GM12878 (cell line): ENCODE measurements at regions of chr7 and their contacts with region 1.

Region 1: DNA sequence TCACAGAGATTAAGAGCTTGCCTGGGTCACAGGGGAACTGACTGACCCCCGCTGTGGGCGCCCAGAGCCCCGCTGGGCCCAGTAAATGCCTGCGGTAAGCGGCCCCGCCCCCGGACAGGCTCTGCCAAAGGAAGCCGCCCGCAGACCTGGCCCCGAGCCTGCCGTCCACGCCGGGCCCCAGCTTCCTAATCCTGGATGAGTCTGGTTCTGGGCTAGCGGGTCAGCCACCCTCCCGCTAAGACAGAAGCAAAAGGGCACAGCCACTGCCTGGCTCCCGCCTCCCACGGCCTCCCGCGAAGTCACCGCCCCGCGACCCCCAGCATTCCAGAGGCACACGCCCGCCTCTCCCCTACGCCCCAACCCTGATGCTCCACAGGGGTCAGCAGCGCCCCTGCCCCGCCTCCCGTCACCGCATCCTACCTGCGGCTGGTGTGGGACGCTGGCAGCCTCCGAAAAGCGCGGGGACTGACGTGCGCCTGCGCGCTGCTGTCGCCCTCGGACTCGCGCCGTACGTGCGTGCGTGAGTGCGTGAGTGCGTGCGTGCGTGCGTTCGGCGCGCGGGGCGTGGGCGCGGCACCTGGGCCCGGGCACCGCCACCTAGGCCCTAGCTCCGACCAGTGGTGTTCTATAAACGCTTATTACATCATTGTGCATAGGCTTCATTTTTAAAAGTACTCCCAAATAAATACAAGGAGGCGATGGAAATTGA is at the start of gene FIGNL1:
- DNase-seq: peak; percentile 59
- ATAC-seq: peak; percentile 93
- H3K4me3 ChIP-seq: peak within 1 kb of the TSS; percentile 77
- H3K27ac ChIP-seq: peak within 1 kb of the TSS; percentile 28
- H3K4me1 ChIP-seq: peaks cover 16% of the 10 kb centered on the region
- H3K27me3 ChIP-seq: no peaks in the 10 kb centered on the region; a peak in 1 of 4 replicates
- CTCF ChIP-seq: no peak
- EP300 ChIP-seq: no peak
- POLR2A ChIP-seq: peak; percentile 90
- RAD21 ChIP-seq: no peak
- polyA plus RNA-seq, gene FIGNL1: 11.5 to 11.6 TPM

Region 2: DNA sequence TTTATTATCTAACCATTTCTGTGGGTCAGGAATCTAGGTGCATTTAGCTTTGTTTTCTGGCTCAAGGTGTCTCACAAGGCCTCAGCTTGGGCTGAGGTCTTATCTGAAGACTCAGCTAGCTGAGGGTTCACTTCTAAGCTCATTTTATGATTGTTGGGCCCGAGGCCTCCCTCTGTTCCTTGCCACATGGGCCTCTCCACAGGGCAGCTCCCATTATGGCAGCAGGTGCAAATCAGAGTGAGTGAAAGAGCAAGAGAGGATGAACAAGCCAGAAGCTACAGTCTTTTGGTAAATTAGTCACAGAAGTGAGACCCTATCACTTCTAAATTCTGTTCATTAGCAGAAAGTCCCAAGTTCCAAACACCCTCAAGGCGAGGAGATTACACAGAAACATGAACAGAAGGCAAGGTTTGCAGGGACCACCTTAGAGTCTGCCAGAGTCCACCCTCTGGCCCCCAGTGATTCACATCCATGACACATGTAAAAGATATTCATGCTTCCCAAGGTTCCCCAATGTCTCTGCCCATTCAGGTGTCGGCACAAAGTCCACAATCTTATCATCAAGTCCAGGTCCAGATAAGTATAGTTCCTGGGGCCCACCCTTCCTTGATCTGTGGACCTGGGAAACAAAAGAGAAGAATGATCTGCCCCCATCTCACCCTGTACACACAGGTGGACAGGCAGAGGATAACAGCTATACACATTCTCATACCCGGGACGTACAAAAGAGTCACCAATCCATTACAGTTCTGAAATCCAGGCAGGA is 23.6 kb before region 1 on chr7:
- CTCF ChIA-PET with region 1: interaction called, 8 read pairs
- POLR2A ChIA-PET with region 1: interaction called, 3 read pairs
- RAD21 ChIA-PET with region 1: no interaction called
- SMC1A ChIA-PET with region 1: interaction called, 10 read pairs
- in situ Hi-C with region 1: no loop called
- intact Hi-C with region 1: no loop called
- DNase-seq: no peak
- ATAC-seq: no peak
- H3K4me3 ChIP-seq: no peak overlapping the region
- H3K27ac ChIP-seq: no peak overlapping the region
- H3K4me1 ChIP-seq: no peaks in the 10 kb centered on the region
- H3K27me3 ChIP-seq: no peaks in the 10 kb centered on the region
- CTCF ChIP-seq: no peak
- EP300 ChIP-seq: no peak
- POLR2A ChIP-seq: no peak
- RAD21 ChIP-seq: no peak

Region 3: GRCh38 chr7:50436133-50436806 is 13.8 kb before region 1 on chr7:
- CTCF ChIA-PET with region 1: interaction called, 6 read pairs
- POLR2A ChIA-PET with region 1: no interaction called
- RAD21 ChIA-PET with region 1: no interaction called
- SMC1A ChIA-PET with region 1: interaction called, 12 read pairs
- in situ Hi-C with region 1: no loop called
- intact Hi-C with region 1: no loop called
- DNase-seq: no peak
- ATAC-seq: no peak
- H3K4me3 ChIP-seq: no peak overlapping the region
- H3K27ac ChIP-seq: no peak overlapping the region
- H3K4me1 ChIP-seq: no peaks in the 10 kb centered on the region
- H3K27me3 ChIP-seq: no peaks in the 10 kb centered on the region
- CTCF ChIP-seq: no peak
- EP300 ChIP-seq: no peak
- POLR2A ChIP-seq: no peak
- RAD21 ChIP-seq: no peak

Region 4: GRCh38 chr7:50865450-50865849 is 415.4 kb after region 1 on chr7:
- CTCF ChIA-PET with region 1: no interaction called
- POLR2A ChIA-PET with region 1: no interaction called
- RAD21 ChIA-PET with region 1: no interaction called
- SMC1A ChIA-PET with region 1: no interaction called
- in situ Hi-C with region 1: no loop called
- intact Hi-C with region 1: no loop called
- DNase-seq: no peak
- ATAC-seq: no peak
- H3K4me3 ChIP-seq: no peak overlapping the region
- H3K27ac ChIP-seq: no peak overlapping the region
- H3K4me1 ChIP-seq: no peaks in the 10 kb centered on the region
- H3K27me3 ChIP-seq: no peaks in the 10 kb centered on the region
- CTCF ChIP-seq: no peak
- EP300 ChIP-seq: no peak
- POLR2A ChIP-seq: no peak
- RAD21 ChIP-seq: no peak